Gastrocnemius medialis (tissue), 4 donors: ENCODE measurements at regions of chr21 and their contacts with region 1.

Region 1: DNA sequence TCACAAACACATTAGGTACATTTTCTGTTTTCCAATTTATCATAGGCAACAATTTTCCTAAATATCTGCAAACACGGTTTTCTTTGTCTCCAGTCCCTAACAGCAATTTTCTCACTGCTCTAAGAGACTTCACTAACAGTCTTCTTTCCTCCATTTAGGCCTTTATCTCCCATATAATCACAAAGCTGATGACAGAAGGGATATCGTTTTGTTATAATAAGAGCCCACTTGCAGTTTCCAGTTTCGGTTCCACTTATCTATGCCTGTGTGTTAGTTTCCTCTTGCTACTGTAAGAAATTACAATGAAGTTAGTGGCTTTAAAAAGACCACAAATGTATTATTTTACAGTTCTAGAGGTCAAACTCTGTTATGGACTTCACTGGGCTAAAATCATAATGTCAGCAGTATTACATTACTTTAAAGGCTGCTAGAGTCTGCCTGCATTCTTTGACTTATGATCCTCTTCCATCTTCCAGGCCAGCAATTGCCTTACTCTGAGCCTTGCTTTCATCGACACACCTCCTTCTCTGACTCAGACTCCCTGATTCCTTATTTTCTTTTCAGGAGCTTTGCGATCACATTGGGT is 549.3 kb downstream of the NCAM2 start:
- DNase-seq: no peak
- ATAC-seq: no peak
- H3K4me3 ChIP-seq: no peak overlapping the region
- H3K27ac ChIP-seq: no peak overlapping the region
- H3K4me1 ChIP-seq: no peaks in the 10 kb centered on the region
- H3K27me3 ChIP-seq: no peaks in the 10 kb centered on the region
- CTCF ChIP-seq: no peak
- POLR2A ChIP-seq: no peak

Region 2: GRCh38 chr21:21605521-21605920 is 58.1 kb after region 1 on chr21:
- in situ Hi-C with region 1: loop called in 1 of 4 experiments (anchors 10 kb)
- intact Hi-C with region 1: no loop called
- DNase-seq: no peak
- ATAC-seq: no peak
- H3K4me3 ChIP-seq: no peak overlapping the region
- H3K27ac ChIP-seq: no peak overlapping the region
- H3K4me1 ChIP-seq: no peaks in the 10 kb centered on the region
- H3K27me3 ChIP-seq: no peaks in the 10 kb centered on the region
- CTCF ChIP-seq: no peak
- POLR2A ChIP-seq: no peak